ENCODE measurements at regions of chr10 and their contacts with region 1.

Region 1: GRCh38 chr10:124741281-124741921 is 2.8 kb downstream of the FAM53B start:
- DNase-seq: peak; percentile 88
- ATAC-seq: peak; percentile 72 to 78
- H3K4me3 ChIP-seq: peak overlapping the region; percentile 78
- H3K27ac ChIP-seq: peak overlapping the region; percentile 88
- H3K4me1 ChIP-seq: peaks cover 79% of the 10 kb centered on the region
- H3K27me3 ChIP-seq: no peaks in the 10 kb centered on the region
- CTCF ChIP-seq: peak; percentile 86

Region 2: DNA sequence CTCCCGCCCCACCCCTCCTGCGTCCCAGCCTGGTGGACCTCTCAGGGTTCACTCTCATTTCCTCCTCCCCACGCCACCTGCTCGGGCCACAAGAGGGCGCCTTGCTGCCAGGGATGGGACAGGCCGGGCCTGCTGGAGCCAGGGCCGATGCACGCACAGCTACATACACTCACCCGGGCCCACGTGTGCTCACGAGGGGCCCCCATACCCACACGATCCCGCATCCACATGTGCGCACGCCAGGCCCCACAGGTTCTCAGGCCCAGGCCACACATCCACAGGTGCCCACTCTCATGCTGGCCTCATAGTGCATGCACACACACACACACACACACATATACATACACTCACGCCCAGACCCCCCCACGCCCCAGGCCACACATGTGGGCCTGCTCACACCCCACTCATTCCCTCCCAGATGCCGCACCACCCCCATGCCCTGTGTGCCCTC is 211.2 kb before region 1 on chr10:
- intact Hi-C with region 1: loop called (anchors 10 kb)
- DNase-seq: peak; percentile 91
- ATAC-seq: peak; percentile 92 to 95
- H3K4me3 ChIP-seq: no peak overlapping the region
- H3K27ac ChIP-seq: no peak overlapping the region
- H3K4me1 ChIP-seq: no peaks in the 10 kb centered on the region
- H3K27me3 ChIP-seq: no peaks in the 10 kb centered on the region
- CTCF ChIP-seq: peak; percentile 89

Region 3: GRCh38 chr10:124632064-124632531 is 109.3 kb before region 1 on chr10:
- intact Hi-C with region 1: loop called (anchors 10 kb)
- DNase-seq: peak; percentile 89
- ATAC-seq: peak; percentile 91 to 94
- H3K4me3 ChIP-seq: peak overlapping the region; percentile 11
- H3K27ac ChIP-seq: peak overlapping the region; percentile 80
- H3K4me1 ChIP-seq: peaks cover 71% of the 10 kb centered on the region
- H3K27me3 ChIP-seq: no peaks in the 10 kb centered on the region
- CTCF ChIP-seq: peak; percentile 67

Region 4: DNA sequence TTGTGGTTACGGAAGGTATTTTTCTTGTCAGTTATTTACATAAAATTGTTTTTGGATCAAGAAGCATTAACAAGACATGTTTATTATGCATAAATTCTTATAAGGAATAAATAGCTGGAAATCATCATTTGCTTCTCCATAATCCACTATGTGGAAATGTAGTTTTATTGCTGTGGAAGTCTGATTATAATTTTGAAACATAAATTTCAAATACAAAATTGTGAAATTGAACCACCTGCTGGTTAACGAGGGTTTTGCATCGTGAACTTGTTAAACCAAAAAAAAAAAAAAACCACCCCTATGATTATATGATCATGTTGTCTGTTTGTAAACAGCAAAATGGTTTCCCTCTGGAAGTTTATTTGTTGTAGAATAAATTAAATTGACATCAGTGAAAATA is 86.1 kb after region 1 on chr10:
- intact Hi-C with region 1: no loop called
- DNase-seq: no peak
- ATAC-seq: no peak
- H3K4me3 ChIP-seq: no peak overlapping the region
- H3K27ac ChIP-seq: no peak overlapping the region
- H3K4me1 ChIP-seq: no peaks in the 10 kb centered on the region
- H3K27me3 ChIP-seq: no peaks in the 10 kb centered on the region
- CTCF ChIP-seq: peak; percentile 55

Measured in lower lobe of right lung (tissue), 2 donors.